CD4-positive, alpha-beta memory T cell (primary cell): ENCODE measurements at regions of chr22 and their contacts with region 1.

Region 1: GRCh38 chr22:50444663-50445062 is 30.2 kb downstream of the SBF1 start:
- DNase-seq: no peak
- H3K4me3 ChIP-seq: no peak overlapping the region
- H3K4me3 Mint-ChIP-seq: no peak overlapping the region
- H3K27ac ChIP-seq: no peak overlapping the region
- H3K27ac Mint-ChIP-seq: peak overlapping the region in 5 of 7 donors; percentile 46 to 85 (median 69)
- H3K4me1 ChIP-seq: peaks cover 16% of the 10 kb centered on the region
- H3K4me1 Mint-ChIP-seq: peaks cover 7 to 18% (median 9%) of the 10 kb centered on the region in 4 donors
- H3K27me3 ChIP-seq: no peaks in the 10 kb centered on the region
- H3K27me3 Mint-ChIP-seq: no peaks in the 10 kb centered on the region

Region 2: DNA sequence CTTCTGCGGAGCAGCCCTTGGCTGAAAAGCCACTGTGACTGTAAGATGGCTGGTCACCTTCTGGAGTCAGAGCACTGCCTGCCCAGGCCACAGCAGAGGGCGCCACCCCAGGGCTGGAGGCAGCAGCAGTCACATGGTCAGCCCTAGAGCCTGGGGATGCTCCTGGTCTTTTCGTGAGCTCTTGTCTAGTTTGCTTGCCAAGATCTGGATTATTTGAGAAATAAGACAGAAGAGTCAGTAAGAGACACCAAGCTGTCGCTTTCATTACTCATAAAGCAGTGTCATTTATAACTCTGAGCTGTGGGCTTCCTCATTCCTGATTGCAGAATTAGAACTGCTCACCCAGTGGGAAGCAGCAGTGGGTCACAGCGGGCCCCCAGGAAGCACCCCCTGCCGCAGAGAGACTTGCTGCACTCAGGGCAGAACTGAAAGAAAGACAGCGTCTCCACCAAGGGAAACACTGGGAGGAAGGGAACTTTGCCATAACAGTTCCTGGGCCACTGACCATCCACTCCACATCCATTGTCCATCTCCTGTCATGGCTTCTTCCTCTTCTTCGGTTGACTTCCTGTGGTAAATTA is 44.8 kb before region 1 on chr22:
- CTCF ChIA-PET with region 1: no interaction called
- POLR2A ChIA-PET with region 1: no interaction called
- intact Hi-C with region 1: no loop called
- DNase-seq: peak in 2 of 5 donors; percentile 12 to 15
- H3K4me3 ChIP-seq: no peak overlapping the region
- H3K4me3 Mint-ChIP-seq: no peak overlapping the region
- H3K27ac ChIP-seq: no peak overlapping the region
- H3K27ac Mint-ChIP-seq: peak overlapping the region in 6 of 7 donors; percentile 57 to 84 (median 76)
- H3K4me1 ChIP-seq: peaks cover 7% of the 10 kb centered on the region
- H3K4me1 Mint-ChIP-seq: peaks cover 13 to 28% (median 18%) of the 10 kb centered on the region in 4 donors
- H3K27me3 ChIP-seq: no peaks in the 10 kb centered on the region
- H3K27me3 Mint-ChIP-seq: no peaks in the 10 kb centered on the region

Region 3: GRCh38 chr22:50474668-50475492 is 30.2 kb after region 1 on chr22 and contains the start of gene SBF1:
- CTCF ChIA-PET with region 1: interaction called, 6 read pairs
- POLR2A ChIA-PET with region 1: interaction called, 17 read pairs
- intact Hi-C with region 1: no loop called
- DNase-seq: peak; percentile 83 to 88 (median 84)
- H3K4me3 ChIP-seq: peak within 1 kb of the TSS; percentile 73 to 79
- H3K4me3 Mint-ChIP-seq: peak within 1 kb of the TSS; percentile 88 to 99 (median 95)
- H3K27ac ChIP-seq: peak within 1 kb of the TSS; percentile 75
- H3K27ac Mint-ChIP-seq: peak within 1 kb of the TSS; percentile 89 to 98 (median 94)
- H3K4me1 ChIP-seq: peaks cover 47% of the 10 kb centered on the region
- H3K4me1 Mint-ChIP-seq: peaks cover 28 to 62% (median 40%) of the 10 kb centered on the region in 4 donors
- H3K27me3 ChIP-seq: no peaks in the 10 kb centered on the region
- H3K27me3 Mint-ChIP-seq: no peaks in the 10 kb centered on the region
- total RNA-seq, gene SBF1: 217 to 221 TPM